MCF 10A (cell line): ENCODE measurements at regions of chr1 and their contacts with region 1.

Region 1: DNA sequence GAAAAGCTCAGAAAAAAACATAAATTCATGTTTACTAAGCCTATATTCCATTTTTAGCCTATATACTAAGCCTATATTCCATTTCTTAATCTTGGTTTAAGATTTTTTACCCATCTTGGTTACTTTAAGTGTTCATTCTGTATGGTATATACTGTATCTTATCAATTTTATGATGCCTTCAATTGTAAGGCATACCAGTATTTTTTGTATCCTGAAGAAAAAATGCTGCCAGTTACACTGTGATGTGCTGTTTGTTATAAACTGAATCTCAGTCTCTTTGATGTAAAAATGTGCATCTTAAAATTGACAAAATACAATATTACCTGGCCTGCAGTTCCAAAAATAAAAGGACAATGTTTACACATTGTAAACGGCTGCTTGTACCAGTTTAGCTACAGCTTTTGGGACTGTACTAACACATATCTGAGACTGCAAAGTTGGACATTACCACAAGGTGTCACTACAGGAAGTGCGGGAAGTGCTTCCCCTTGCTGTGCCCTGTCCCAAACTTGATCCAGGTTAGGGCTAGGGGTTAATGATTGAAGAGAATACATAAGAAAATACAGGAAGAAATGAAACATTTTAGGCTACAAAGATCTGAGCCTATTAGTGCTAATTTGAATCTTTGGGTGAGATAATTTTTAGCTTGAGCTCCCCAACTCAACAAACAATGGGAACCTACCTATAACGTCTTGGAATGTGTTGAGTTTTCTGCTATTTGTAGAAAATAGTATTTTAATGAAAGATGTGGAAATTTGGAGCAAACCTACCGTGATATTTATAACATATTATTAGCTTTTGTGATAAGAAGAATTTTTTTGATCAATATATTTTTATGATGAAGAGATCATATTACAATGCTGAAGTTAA is 108.9 kb downstream of the LBR start:
- DNase-seq: peak; percentile 85
- H3K4me3 Mint-ChIP-seq: no peak overlapping the region
- H3K27ac Mint-ChIP-seq: no peak overlapping the region
- H3K4me1 Mint-ChIP-seq: no peaks in the 10 kb centered on the region
- H3K27me3 Mint-ChIP-seq: no peaks in the 10 kb centered on the region
- CTCF ChIP-seq: peak; percentile 97

Region 2: GRCh38 chr1:225299624-225300023 is 19.3 kb before region 1 on chr1:
- CTCF ChIA-PET with region 1: interaction called, 108 read pairs
- POLR2A ChIA-PET with region 1: interaction called, 4 read pairs
- intact Hi-C with region 1: no loop called
- DNase-seq: peak; percentile 79
- H3K4me3 Mint-ChIP-seq: no peak overlapping the region
- H3K27ac Mint-ChIP-seq: no peak overlapping the region
- H3K4me1 Mint-ChIP-seq: peaks cover 11% of the 10 kb centered on the region
- H3K27me3 Mint-ChIP-seq: no peaks in the 10 kb centered on the region
- CTCF ChIP-seq: no peak

Region 3: GRCh38 chr1:225338545-225338944 is 19.6 kb after region 1 on chr1:
- CTCF ChIA-PET with region 1: interaction called, 47 read pairs
- POLR2A ChIA-PET with region 1: interaction called, 5 read pairs
- intact Hi-C with region 1: loop called (anchors 1 kb)
- DNase-seq: no peak
- H3K4me3 Mint-ChIP-seq: no peak overlapping the region
- H3K27ac Mint-ChIP-seq: no peak overlapping the region
- H3K4me1 Mint-ChIP-seq: no peaks in the 10 kb centered on the region
- H3K27me3 Mint-ChIP-seq: no peaks in the 10 kb centered on the region
- CTCF ChIP-seq: no peak

Region 4: GRCh38 chr1:225354906-225355305 is 36.0 kb after region 1 on chr1:
- CTCF ChIA-PET with region 1: interaction called, 17 read pairs
- POLR2A ChIA-PET with region 1: interaction called, 4 read pairs
- intact Hi-C with region 1: no loop called
- DNase-seq: peak; percentile 87
- H3K4me3 Mint-ChIP-seq: no peak overlapping the region
- H3K27ac Mint-ChIP-seq: peak overlapping the region; percentile 63
- H3K4me1 Mint-ChIP-seq: peaks cover 33% of the 10 kb centered on the region
- H3K27me3 Mint-ChIP-seq: no peaks in the 10 kb centered on the region
- CTCF ChIP-seq: no peak

Region 5: DNA sequence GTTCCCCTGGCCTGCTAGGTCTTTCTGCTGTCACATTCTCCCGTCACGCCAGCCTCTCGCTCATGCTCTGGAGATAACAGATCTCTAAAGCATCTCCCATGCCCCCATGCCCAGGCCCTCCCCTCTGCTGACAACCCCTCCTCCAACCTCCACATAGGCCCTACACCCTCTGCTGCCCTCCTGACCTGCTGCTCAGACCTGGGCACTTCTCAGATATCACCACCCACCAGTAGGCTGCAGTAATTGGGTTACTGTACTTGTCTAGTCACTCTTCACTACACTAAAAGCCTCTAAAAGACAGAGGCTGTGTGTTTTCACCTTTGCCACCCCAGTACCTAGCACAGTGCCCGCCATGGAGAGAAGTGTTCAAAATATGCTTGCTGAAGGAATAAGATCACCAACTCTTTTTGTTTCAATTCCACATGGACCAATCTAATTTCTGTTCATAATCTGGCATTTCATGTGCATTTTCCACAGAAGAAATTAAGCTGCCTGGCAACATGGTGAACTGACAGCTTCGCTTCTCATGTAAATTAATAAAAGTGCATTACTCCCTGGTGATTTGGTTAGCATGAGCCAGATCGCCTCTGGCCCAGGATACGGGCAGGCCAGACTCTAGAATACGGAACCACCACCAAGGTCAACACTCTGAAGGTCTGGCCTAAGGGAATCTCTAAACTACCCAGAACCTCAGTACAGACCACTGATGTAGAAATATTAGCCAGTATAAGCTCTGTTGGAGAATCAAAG is 88.2 kb after region 1 on chr1:
- CTCF ChIA-PET with region 1: interaction called, 21 read pairs
- POLR2A ChIA-PET with region 1: no interaction called
- intact Hi-C with region 1: no loop called
- DNase-seq: no peak
- H3K4me3 Mint-ChIP-seq: no peak overlapping the region
- H3K27ac Mint-ChIP-seq: peak overlapping the region; percentile 67
- H3K4me1 Mint-ChIP-seq: no peaks in the 10 kb centered on the region
- H3K27me3 Mint-ChIP-seq: no peaks in the 10 kb centered on the region
- CTCF ChIP-seq: no peak

Region 6: GRCh38 chr1:225454733-225455132 is 135.8 kb after region 1 on chr1:
- CTCF ChIA-PET with region 1: interaction called, 29 read pairs
- POLR2A ChIA-PET with region 1: interaction called, 8 read pairs
- intact Hi-C with region 1: no loop called
- DNase-seq: peak; percentile 96
- H3K4me3 Mint-ChIP-seq: peak overlapping the region; percentile 2
- H3K27ac Mint-ChIP-seq: peak overlapping the region; percentile 60
- H3K4me1 Mint-ChIP-seq: peaks cover 61% of the 10 kb centered on the region
- H3K27me3 Mint-ChIP-seq: no peaks in the 10 kb centered on the region
- CTCF ChIP-seq: no peak